Activated CD4-positive, alpha-beta T cell treated with anti-CD3 and anti-CD28 coated beads, Interleukin-2, amount 10 ng/mL, durations not matched to agents 7 days and 5 days (primary cell): ENCODE measurements at regions of chr20 and their contacts with region 1.

Region 1: DNA sequence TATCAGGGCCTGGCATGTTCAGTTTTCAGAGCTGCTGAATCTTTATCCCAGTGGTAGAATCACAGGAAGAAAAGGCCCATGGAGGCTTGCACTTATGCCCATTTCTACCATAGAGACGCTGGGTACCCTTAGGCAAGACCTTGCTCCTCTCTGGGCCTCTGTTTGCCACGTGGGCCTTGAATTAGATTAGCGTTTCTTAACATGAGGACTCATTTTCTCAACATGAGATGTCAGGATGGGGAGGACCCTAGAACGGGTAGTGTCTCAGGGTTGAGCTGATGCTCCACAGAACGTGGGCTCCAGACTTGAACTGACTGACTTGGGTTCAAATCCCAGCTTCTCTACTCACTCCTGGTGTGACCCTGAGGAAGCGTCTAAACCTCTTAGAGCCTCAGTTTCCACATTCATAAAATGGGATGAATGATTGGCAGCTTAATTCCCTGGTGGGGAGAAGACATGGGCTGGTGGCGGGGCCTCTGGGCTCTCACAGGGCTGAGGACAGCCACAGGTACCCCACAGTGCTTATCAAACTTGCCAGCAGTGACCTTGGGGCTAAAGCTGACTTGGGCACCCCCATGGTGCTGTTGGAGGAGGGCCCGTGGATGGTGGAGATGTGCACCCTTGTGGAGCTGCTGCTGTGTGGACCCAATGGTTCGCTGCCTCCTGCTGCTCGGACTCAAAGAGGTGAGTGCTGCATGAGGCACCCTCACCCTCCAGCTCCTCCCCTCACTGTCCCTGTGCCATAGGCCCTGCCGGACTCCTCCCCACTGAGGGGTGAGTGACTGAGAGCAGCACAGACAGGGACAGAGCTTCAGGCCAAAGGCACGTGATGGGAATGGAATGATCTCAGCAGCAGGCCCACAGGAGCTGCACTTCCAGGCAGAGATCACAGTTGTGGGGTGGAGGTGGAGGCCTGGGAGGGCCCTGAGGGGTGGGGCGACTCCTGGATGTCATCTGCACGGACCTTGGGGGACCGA is 28.2 kb downstream of the SUN5 start:
- DNase-seq: no peak
- H3K4me3 Mint-ChIP-seq: no peak overlapping the region
- H3K27ac Mint-ChIP-seq: peak overlapping the region; percentile 28
- H3K4me1 Mint-ChIP-seq: peaks cover 14% of the 10 kb centered on the region
- H3K27me3 Mint-ChIP-seq: no peaks in the 10 kb centered on the region

Region 2: GRCh38 chr20:32718731-32719348 is 257.1 kb before region 1 on chr20:
- CTCF ChIA-PET with region 1: no interaction called
- POLR2A ChIA-PET with region 1: no interaction called
- DNase-seq: no peak
- H3K4me3 Mint-ChIP-seq: no peak overlapping the region
- H3K27ac Mint-ChIP-seq: no peak overlapping the region
- H3K4me1 Mint-ChIP-seq: no peaks in the 10 kb centered on the region
- H3K27me3 Mint-ChIP-seq: no peaks in the 10 kb centered on the region

Region 3: GRCh38 chr20:32991383-32991782 is 15.4 kb after region 1 on chr20:
- CTCF ChIA-PET with region 1: interaction called, 11 read pairs
- POLR2A ChIA-PET with region 1: no interaction called
- DNase-seq: no peak
- H3K4me3 Mint-ChIP-seq: no peak overlapping the region
- H3K27ac Mint-ChIP-seq: no peak overlapping the region
- H3K4me1 Mint-ChIP-seq: peaks cover 13% of the 10 kb centered on the region
- H3K27me3 Mint-ChIP-seq: no peaks in the 10 kb centered on the region

Region 4: GRCh38 chr20:33026072-33026778 is 50.2 kb after region 1 on chr20:
- CTCF ChIA-PET with region 1: no interaction called
- POLR2A ChIA-PET with region 1: no interaction called
- DNase-seq: no peak
- H3K4me3 Mint-ChIP-seq: no peak overlapping the region
- H3K27ac Mint-ChIP-seq: no peak overlapping the region
- H3K4me1 Mint-ChIP-seq: no peaks in the 10 kb centered on the region
- H3K27me3 Mint-ChIP-seq: no peaks in the 10 kb centered on the region

Region 5: GRCh38 chr20:33148040-33148439 is 172.1 kb after region 1 on chr20:
- CTCF ChIA-PET with region 1: no interaction called
- POLR2A ChIA-PET with region 1: no interaction called
- DNase-seq: no peak
- H3K4me3 Mint-ChIP-seq: no peak overlapping the region
- H3K27ac Mint-ChIP-seq: no peak overlapping the region
- H3K4me1 Mint-ChIP-seq: no peaks in the 10 kb centered on the region
- H3K27me3 Mint-ChIP-seq: peaks cover 38% of the 10 kb centered on the region